RWPE1 (cell line): ENCODE measurements at regions of chr14 and their contacts with region 1.

Region 1: GRCh38 chr14:22872033-22872832 is 693 bp downstream of the LRP10 start:
- DNase-seq: peak; percentile 78
- H3K27ac ChIP-seq: peak overlapping the region; percentile 99
- CTCF ChIP-seq: peak; percentile 95

Region 2: GRCh38 chr14:22886500-22887259 is 14.4 kb after region 1 on chr14:
- CTCF ChIA-PET with region 1: interaction called, 40 read pairs
- POLR2A ChIA-PET with region 1: no interaction called
- DNase-seq: peak; percentile 77
- H3K27ac ChIP-seq: peak overlapping the region; percentile 88
- CTCF ChIP-seq: no peak

Region 3: GRCh38 chr14:22973217-22974032 is 101.2 kb after region 1 on chr14:
- CTCF ChIA-PET with region 1: no interaction called
- POLR2A ChIA-PET with region 1: no interaction called
- DNase-seq: no peak
- H3K27ac ChIP-seq: peak overlapping the region; percentile 99
- CTCF ChIP-seq: peak; percentile 75